ENCODE measurements at regions of chr5 and their contacts with region 1.

Region 1: GRCh38 chr5:153974131-153974812 is 64.4 kb downstream of the FAM114A2 start:
- DNase-seq: peak; percentile 39
- ATAC-seq: peak; percentile 62
- H3K4me3 Mint-ChIP-seq: no peak overlapping the region
- H3K27ac Mint-ChIP-seq: no peak overlapping the region
- H3K4me1 Mint-ChIP-seq: no peaks in the 10 kb centered on the region
- H3K27me3 Mint-ChIP-seq: peaks cover 4% of the 10 kb centered on the region
- CTCF ChIP-seq: peak; percentile 76

Region 2: GRCh38 chr5:154179846-154180710 is 205.8 kb after region 1 on chr5:
- CTCF ChIA-PET with region 1: interaction called, 24 read pairs
- POLR2A ChIA-PET with region 1: no interaction called
- intact Hi-C with region 1: loop called (anchors 2 kb)
- DNase-seq: peak; percentile 48
- ATAC-seq: peak; percentile 97
- H3K4me3 Mint-ChIP-seq: no peak overlapping the region
- H3K27ac Mint-ChIP-seq: no peak overlapping the region
- H3K4me1 Mint-ChIP-seq: no peaks in the 10 kb centered on the region
- H3K27me3 Mint-ChIP-seq: peaks cover 8% of the 10 kb centered on the region
- CTCF ChIP-seq: peak; percentile 57